Activated B cell treated with CpG ODN at 0.5 μM for 24 hours (primary cell): ENCODE measurements at regions of chr1 and their contacts with region 1.

Region 1: DNA sequence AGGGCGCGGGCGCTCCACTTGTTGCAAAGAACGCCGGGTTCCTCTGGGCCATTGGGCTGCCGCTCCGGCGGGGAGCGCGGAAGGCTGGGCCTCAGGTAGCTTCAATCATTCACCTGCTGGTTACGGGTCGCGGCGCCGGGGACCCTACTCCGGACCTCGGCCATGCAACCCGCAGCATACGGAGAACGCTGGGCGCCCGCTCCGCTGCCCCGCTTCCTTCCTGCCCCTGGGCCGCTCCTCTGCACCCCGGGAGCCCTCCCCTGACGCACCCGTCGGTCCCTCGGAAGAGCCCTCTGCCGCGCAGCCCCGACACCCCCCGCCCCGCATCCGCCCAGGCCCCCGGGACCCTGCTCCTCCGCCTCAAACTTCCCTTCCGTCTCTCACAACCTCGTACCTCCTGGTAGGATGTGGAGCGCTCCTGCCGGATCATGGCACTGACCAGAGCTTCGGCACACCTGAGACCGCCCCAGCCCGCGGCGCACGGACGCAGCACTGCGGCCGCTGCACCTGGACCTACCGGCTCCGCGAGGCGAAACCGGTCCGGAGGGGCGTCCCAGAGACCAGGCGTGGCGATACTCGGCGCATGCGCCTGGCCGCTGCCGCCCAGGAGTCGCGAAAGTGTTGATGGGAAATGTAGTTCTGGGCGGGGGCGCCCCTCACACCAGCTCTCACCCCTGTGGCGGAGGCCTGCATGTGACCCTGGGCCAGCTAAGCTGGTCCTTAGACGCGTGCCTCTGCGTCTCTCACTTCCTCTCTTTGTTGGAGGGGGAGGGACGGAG is at the start of gene PACC1:
- DNase-seq: peak; percentile 93
- ATAC-seq: peak; percentile 98
- H3K4me3 Mint-ChIP-seq: peak within 1 kb of the TSS; percentile 100
- H3K27ac Mint-ChIP-seq: peak within 1 kb of the TSS; percentile 96
- H3K4me1 Mint-ChIP-seq: peaks cover 43% of the 10 kb centered on the region
- H3K27me3 Mint-ChIP-seq: no peaks in the 10 kb centered on the region
- CTCF ChIP-seq: no peak
- total RNA-seq, gene PACC1: 15.2 and 20.0 TPM in 2 replicates

Region 2: DNA sequence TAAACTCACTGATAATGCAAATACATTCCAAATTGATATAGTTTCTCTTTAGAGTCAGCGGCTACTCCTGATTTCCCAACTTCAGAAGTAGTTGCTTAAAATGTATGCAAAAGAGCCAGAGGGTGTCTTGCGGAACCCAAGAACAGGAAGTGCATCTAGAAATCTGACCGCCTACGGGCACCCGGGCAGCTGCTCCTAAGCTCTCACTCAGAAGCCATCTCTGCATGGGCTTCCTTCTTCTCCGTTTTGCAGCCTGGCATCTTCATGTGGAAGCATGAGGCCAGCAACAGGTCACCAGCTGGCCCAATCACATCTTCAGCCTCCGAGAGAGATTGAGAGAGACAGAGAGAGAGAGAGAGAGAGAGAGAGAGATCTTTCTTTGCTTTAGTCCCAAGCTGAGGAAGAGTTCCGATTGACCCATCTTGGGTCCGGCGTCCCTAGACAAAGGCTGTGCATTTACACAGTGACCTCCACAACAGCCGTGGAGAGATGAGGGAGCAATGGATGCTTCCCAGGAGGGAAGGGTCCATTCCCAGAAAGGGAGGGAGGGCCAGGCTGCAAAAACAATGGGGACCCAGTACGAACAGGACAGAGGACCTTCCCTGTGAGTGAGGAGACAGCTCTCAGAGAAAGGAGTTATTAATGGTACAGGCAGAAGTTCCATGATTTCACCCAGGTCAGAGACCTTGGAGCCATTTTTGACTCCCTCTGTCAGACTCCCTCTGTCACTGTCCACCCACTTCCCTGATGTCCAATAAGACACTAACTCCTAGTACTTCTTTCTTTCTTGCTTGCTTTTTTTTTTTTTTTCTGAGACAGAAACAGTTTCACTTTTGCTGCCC is 807.4 kb before region 1 on chr1:
- CTCF ChIA-PET with region 1: no interaction called
- POLR2A ChIA-PET with region 1: interaction called, 3 read pairs
- intact Hi-C with region 1: loop called (anchors 10 kb)
- DNase-seq: no peak
- ATAC-seq: peak; percentile 92
- H3K4me3 Mint-ChIP-seq: peak overlapping the region; percentile 88
- H3K27ac Mint-ChIP-seq: peak overlapping the region; percentile 91
- H3K4me1 Mint-ChIP-seq: peaks cover 29% of the 10 kb centered on the region
- H3K27me3 Mint-ChIP-seq: no peaks in the 10 kb centered on the region
- CTCF ChIP-seq: no peak

Region 3: DNA sequence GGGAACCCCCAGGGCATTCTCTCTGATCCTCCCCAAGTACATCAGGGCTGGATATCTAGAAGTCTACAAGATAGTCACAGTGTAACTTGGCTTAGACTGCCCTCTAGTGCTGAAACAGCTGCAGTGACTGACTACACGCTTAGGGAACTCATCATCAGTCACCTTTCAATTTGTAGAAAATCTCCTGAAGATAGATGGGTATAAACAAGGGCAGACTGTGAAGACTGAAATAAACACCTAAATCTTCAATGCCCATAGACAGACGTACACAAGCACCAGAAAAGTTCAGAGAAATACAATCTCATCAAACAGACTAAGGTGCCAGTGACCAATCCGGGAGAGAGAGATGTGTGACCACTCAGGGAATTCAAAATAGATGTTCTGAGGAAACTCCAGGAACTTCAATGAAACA is 46.4 kb before region 1 on chr1:
- CTCF ChIA-PET with region 1: no interaction called
- POLR2A ChIA-PET with region 1: no interaction called
- intact Hi-C with region 1: no loop called
- DNase-seq: no peak
- ATAC-seq: peak; percentile 89
- H3K4me3 Mint-ChIP-seq: no peak overlapping the region
- H3K27ac Mint-ChIP-seq: no peak overlapping the region
- H3K4me1 Mint-ChIP-seq: no peaks in the 10 kb centered on the region
- H3K27me3 Mint-ChIP-seq: no peaks in the 10 kb centered on the region
- CTCF ChIP-seq: peak; percentile 25

Region 4: GRCh38 chr1:212401838-212402582 is 12.5 kb before region 1 on chr1:
- CTCF ChIA-PET with region 1: no interaction called
- POLR2A ChIA-PET with region 1: interaction called, 14 read pairs
- intact Hi-C with region 1: no loop called
- DNase-seq: no peak
- ATAC-seq: no peak
- H3K4me3 Mint-ChIP-seq: no peak overlapping the region
- H3K27ac Mint-ChIP-seq: no peak overlapping the region
- H3K4me1 Mint-ChIP-seq: peaks cover 9% of the 10 kb centered on the region
- H3K27me3 Mint-ChIP-seq: no peaks in the 10 kb centered on the region
- CTCF ChIP-seq: no peak

Region 5: GRCh38 chr1:212432706-212433576 is 18.4 kb after region 1 on chr1 and contains the start of gene NENF:
- CTCF ChIA-PET with region 1: no interaction called
- POLR2A ChIA-PET with region 1: interaction called, 21 read pairs
- intact Hi-C with region 1: loop called (anchors 1 kb)
- DNase-seq: peak; percentile 80
- ATAC-seq: peak; percentile 99
- H3K4me3 Mint-ChIP-seq: peak within 1 kb of the TSS; percentile 78
- H3K27ac Mint-ChIP-seq: peak within 1 kb of the TSS; percentile 22
- H3K4me1 Mint-ChIP-seq: peaks cover 16% of the 10 kb centered on the region
- H3K27me3 Mint-ChIP-seq: no peaks in the 10 kb centered on the region
- CTCF ChIP-seq: no peak
- total RNA-seq, gene NENF: 24.1 and 26.4 TPM in 2 replicates